MCF 10A (cell line): ENCODE measurements at regions of chr20 and their contacts with region 1.

Region 1: DNA sequence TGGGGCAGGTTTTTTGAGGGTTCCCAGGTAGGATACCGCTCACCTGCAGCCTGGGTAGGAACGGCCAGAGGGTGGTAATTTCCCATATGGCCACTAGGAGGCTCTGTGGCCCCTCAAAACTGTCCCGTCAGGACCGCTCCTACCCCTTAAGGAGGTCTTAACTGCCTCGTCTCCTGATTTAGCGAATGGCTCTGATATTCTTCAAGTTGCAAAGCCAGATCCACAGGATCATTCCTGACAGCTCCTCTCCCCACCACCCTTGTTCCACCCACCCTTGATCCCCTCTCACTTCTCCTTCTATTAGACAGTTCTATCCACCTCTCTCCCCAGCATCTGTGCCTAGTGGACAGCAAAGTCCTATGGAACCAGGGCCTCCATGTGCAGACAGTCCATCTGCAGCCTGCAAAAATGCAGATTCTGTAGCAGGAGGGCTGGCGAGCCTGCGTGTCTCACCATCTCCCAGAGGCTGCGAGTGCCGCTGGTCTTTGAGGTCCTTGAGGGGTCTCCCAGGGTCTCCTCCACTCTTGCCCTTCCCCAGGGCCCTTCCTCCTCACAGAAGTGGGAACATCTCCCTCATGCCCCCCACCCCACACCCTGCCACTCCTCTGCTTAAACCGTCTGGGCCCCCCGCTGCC is 34.3 kb upstream of the ZBP1 start:
- DNase-seq: peak; percentile 56
- H3K4me3 Mint-ChIP-seq: no peak overlapping the region
- H3K27ac Mint-ChIP-seq: no peak overlapping the region
- H3K4me1 Mint-ChIP-seq: peaks cover 13% of the 10 kb centered on the region
- H3K27me3 Mint-ChIP-seq: no peaks in the 10 kb centered on the region
- CTCF ChIP-seq: peak; percentile 88

Region 2: DNA sequence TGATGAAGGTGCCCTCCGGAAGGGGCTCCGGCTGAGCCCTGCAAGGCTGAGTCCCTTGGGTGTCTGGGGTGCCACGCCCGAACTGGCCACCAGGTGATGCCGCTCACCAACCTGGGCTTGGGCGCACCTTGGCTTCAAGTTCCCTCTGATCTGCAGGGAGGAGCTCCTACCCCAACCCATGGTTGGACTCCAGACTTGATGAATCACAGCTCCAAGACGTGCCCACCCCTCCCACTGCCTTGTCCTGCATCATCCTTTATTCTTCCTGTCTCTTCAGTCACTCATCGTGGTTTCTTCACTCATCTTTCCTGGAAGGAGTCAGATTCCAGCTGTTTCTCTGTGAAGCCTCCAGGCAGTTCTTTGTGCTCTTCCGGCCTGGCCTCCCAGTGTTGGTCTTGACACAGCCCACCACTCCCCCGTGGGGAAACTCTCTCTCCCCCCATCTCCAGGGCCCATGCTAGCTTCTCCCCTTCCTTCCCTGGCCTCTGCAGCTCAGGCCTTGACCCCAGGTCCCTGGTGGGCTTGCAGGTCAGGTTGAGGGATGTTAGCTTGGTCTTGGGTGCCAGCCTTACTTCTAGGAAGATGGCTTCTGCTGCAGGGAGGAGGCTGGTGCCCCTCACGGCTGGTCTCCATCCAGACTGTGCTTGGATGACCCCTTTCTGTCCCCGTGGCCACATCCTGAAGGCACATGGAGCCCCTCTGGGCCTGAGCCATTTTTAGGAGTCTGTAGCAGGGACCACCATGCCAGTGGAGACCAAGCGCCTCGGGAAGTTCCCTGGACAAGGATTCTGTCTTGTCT is 31.7 kb before region 1 on chr20:
- CTCF ChIA-PET with region 1: interaction called, 20 read pairs
- POLR2A ChIA-PET with region 1: no interaction called
- intact Hi-C with region 1: no loop called
- DNase-seq: peak; percentile 75
- H3K4me3 Mint-ChIP-seq: no peak overlapping the region
- H3K27ac Mint-ChIP-seq: no peak overlapping the region
- H3K4me1 Mint-ChIP-seq: peaks cover 6% of the 10 kb centered on the region
- H3K27me3 Mint-ChIP-seq: no peaks in the 10 kb centered on the region
- CTCF ChIP-seq: peak; percentile 84

Region 3: DNA sequence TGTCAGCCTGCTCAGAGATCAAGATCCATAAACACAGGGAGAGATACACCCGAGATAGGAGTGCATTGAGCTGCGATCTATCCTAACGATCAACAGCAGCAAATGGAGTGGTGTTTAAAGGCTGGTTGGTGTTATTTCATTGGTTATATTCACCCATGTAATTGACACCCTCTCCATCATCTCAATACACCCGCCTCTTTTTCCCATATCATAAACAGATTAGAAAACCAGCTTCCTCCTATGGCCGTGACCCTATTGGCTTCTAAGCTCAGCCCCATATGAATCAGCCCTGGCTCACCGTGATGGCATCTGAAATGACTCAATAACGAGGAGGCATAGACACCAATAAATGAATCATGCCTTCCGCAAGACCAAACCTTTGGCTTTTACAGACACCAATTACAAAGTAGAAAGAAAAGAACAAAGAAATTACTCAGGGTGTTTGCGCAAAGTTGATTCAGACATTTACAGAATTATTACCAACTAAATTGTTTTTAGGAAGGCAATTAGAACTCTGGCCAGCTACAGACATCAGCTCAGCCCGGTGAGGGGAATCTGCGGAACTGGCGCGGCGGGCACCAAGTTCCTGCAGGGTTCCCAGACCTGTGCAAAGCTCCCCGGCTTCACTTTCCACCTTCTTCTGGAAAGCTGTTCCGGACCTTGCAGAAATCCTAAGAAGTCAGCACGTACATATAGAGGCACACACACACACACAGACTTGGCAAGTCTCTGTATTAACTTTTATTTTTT is 43.8 kb after region 1 on chr20:
- CTCF ChIA-PET with region 1: interaction called, 5 read pairs
- POLR2A ChIA-PET with region 1: interaction called, 3 read pairs
- intact Hi-C with region 1: loop called (anchors 5 kb)
- DNase-seq: peak; percentile 99
- H3K4me3 Mint-ChIP-seq: peak overlapping the region; percentile 64
- H3K27ac Mint-ChIP-seq: peak overlapping the region; percentile 66
- H3K4me1 Mint-ChIP-seq: peaks cover 42% of the 10 kb centered on the region
- H3K27me3 Mint-ChIP-seq: no peaks in the 10 kb centered on the region
- CTCF ChIP-seq: no peak

Region 4: DNA sequence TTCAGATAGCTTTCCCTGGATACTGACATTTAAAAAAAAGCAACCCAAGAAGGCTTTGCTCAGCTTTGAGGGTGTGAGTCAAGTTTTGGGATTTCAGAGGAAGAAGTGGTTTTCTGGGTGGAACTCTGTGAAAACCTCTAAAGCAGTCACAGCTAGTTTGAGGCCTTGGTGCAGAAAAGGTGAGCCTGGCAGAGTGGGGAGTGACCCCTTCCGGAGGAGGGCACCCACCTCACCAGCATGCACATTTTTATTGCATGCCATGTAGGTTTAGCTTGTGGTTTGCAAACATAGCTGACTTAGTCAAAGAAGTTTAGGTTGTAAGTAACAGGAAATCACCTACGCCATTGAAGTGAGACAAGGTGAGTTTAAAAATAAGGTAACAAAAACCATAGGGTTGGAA is 202.2 kb after region 1 on chr20:
- CTCF ChIA-PET with region 1: interaction called, 11 read pairs
- POLR2A ChIA-PET with region 1: no interaction called
- intact Hi-C with region 1: no loop called
- DNase-seq: no peak
- H3K4me3 Mint-ChIP-seq: no peak overlapping the region
- H3K27ac Mint-ChIP-seq: no peak overlapping the region
- H3K4me1 Mint-ChIP-seq: no peaks in the 10 kb centered on the region
- H3K27me3 Mint-ChIP-seq: peaks cover 75% of the 10 kb centered on the region
- CTCF ChIP-seq: no peak

Region 5: DNA sequence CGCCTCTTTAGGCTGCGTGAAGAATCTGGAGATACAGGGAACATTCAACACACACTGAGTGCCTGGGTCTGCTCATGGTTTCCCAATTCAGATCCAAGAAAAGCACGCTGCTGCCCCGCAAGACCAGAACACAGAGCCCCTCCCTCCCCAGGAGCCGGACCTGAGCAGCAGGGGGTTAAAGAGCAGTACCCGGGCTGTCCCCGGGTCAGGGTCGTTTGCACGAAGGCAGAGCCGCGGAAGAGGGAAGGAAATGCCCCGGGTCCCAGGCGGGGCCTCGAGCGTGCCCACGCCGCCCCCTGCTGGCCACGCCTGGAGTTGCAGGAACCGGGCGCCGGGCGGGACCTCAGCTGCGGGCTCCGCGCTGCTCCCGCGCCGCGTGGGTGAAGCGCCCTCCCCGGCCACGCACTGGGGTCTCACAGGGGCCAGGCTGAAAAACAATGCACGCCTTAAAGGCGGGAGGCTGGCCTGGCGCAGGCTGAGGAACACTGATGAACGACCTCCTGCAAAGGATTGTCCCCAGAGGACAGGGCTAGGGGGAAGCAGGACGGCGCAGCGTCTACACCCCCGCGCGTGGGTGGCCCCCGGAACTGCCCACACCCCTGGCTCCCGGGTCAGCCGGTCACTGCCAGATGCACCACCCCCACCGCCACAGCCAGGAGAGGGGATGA is 525.1 kb after region 1 on chr20:
- CTCF ChIA-PET with region 1: interaction called, 54 read pairs
- POLR2A ChIA-PET with region 1: interaction called, 3 read pairs
- intact Hi-C with region 1: loop called (anchors 1 kb)
- DNase-seq: peak; percentile 40
- H3K4me3 Mint-ChIP-seq: no peak overlapping the region
- H3K27ac Mint-ChIP-seq: no peak overlapping the region
- H3K4me1 Mint-ChIP-seq: no peaks in the 10 kb centered on the region
- H3K27me3 Mint-ChIP-seq: peaks cover 32% of the 10 kb centered on the region
- CTCF ChIP-seq: peak; percentile 99